ENCODE measurements at regions of chr21 and their contacts with region 1.

Region 1: DNA sequence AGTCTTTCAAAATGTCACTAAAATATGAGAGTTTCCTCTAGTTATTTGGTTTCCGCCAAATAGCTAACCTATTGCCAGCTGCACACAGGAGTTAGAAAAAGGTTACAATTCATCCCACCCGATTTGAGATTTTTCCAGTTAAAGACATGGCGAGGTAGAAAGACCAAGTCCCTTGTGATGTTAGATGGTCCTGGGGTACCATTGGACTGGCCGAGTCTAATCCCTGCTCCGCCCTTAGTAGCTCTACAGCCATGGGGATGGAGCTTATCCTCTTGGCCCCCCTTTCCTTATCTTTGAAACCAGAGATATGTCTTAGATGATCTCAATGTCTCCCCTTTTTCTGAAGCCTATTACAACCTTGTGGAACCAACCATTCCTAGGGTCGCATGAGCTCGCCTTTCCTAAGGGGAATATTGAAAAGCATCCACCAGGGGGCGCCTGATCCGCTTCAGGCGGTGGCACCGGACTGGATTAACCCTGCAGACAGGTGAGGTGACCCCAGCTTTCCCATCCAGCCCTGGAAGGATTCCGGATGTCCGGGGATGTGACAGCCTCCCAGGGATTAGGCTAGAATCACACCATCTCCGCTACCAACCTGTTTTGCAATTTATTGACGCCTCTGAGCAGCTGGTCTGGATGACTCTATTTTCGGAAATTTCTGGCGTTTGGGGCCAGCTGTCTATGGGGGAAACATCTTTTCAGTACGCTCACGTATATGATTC is 68.3 kb upstream of the SIM2 start:
- DNase-seq: peak; percentile 71
- ATAC-seq: no peak
- H3K4me3 Mint-ChIP-seq: no peak overlapping the region
- H3K27ac Mint-ChIP-seq: no peak overlapping the region
- H3K4me1 Mint-ChIP-seq: no peaks in the 10 kb centered on the region
- H3K27me3 Mint-ChIP-seq: peaks cover 2% of the 10 kb centered on the region

Region 2: GRCh38 chr21:36396971-36397370 is 233.7 kb before region 1 on chr21:
- CTCF ChIA-PET with region 1: no interaction called
- POLR2A ChIA-PET with region 1: no interaction called
- DNase-seq: no peak
- ATAC-seq: no peak
- H3K4me3 Mint-ChIP-seq: no peak overlapping the region
- H3K27ac Mint-ChIP-seq: peak overlapping the region; percentile 3
- H3K4me1 Mint-ChIP-seq: no peaks in the 10 kb centered on the region
- H3K27me3 Mint-ChIP-seq: no peaks in the 10 kb centered on the region

Region 3: DNA sequence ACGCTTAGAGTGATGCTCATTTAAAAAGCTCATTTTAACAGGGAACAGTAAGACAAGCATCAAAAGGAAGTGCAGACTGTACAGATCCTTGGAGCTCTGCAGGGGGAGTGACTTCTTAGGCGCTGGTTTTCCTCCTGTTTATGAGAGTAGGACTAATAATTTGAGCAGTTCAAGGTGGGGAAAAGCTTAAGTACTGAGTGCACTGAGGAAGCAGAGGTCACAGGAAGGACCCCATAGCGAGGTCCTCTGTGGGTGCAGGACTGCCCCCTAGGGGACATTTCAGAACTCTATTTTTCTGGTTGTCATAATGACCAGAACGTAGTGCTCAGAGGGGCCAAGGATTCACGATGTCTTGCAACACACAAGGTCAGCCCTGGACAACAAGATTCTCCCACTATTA is 223.7 kb after region 1 on chr21:
- CTCF ChIA-PET with region 1: interaction called, 24 read pairs
- POLR2A ChIA-PET with region 1: no interaction called
- DNase-seq: peak; percentile 56
- ATAC-seq: peak; percentile 42
- H3K4me3 Mint-ChIP-seq: no peak overlapping the region
- H3K27ac Mint-ChIP-seq: no peak overlapping the region
- H3K4me1 Mint-ChIP-seq: peaks cover 17% of the 10 kb centered on the region
- H3K27me3 Mint-ChIP-seq: no peaks in the 10 kb centered on the region

Region 4: DNA sequence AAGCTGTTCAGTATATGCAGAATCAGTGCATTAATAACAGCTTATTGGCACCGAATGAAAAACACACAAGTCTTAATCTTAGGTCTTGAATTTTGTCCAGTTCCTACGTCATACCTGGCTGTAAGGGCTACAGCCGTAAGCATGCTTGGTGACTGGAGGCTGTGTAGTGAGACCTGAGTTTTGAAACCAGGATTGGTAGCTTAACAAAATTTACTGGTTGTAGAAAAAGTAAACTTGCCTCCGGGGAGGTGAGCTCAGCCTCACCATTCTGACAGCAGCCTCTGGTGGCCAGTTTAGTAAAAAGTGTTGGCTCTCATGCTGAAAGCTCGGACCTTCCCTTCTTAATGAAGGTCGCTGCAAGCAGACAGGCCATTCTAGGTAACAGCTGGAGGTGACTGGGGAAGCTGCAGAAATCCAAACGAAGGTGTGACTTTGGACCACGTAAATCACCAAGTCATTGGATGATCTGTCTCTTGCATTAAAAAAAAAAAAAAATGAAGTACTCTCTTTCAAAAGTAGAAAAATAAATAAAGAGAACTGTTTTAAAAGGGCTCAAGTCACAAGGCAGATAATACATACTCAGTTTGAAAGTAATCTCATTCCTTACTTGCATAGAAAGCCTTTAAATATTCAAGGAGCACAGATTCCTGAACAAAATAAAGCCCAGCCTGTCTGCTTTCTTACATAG is 287.0 kb after region 1 on chr21:
- CTCF ChIA-PET with region 1: interaction called, 12 read pairs
- POLR2A ChIA-PET with region 1: no interaction called
- DNase-seq: no peak
- ATAC-seq: no peak
- H3K4me3 Mint-ChIP-seq: no peak overlapping the region
- H3K27ac Mint-ChIP-seq: no peak overlapping the region
- H3K4me1 Mint-ChIP-seq: peaks cover 4% of the 10 kb centered on the region
- H3K27me3 Mint-ChIP-seq: no peaks in the 10 kb centered on the region

Region 5: DNA sequence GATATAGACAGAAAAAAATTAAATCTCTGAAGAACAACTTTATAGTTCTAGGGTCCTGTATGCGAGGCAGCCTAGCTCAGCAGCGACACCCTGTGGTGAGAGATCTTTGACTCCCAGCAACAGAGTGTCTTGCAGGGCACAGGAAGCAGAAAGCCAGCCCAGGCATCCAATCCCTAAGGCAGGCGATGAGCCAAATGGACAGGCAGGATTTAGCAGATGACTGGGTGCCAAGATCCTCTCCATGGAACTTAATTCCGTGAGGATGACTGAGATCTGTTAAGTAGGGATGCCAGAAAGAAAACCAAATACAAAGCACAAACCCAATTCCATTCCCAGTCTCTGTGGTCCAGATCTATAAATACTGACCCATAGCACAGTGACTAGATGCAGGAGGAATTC is 297.1 kb after region 1 on chr21:
- CTCF ChIA-PET with region 1: interaction called, 14 read pairs
- POLR2A ChIA-PET with region 1: no interaction called
- DNase-seq: peak; percentile 83
- ATAC-seq: peak; percentile 65
- H3K4me3 Mint-ChIP-seq: no peak overlapping the region
- H3K27ac Mint-ChIP-seq: no peak overlapping the region
- H3K4me1 Mint-ChIP-seq: no peaks in the 10 kb centered on the region
- H3K27me3 Mint-ChIP-seq: no peaks in the 10 kb centered on the region

Measured in activated CD8-positive, alpha-beta T cell treated with anti-CD3 and anti-CD28 coated beads, Interleukin-2, amount 10 ng/mL, durations not matched to agents 7 days and 5 days (primary cell).